CD14-positive monocyte (primary cell): ENCODE measurements at regions of chr17 and their contacts with region 1.

Region 1: DNA sequence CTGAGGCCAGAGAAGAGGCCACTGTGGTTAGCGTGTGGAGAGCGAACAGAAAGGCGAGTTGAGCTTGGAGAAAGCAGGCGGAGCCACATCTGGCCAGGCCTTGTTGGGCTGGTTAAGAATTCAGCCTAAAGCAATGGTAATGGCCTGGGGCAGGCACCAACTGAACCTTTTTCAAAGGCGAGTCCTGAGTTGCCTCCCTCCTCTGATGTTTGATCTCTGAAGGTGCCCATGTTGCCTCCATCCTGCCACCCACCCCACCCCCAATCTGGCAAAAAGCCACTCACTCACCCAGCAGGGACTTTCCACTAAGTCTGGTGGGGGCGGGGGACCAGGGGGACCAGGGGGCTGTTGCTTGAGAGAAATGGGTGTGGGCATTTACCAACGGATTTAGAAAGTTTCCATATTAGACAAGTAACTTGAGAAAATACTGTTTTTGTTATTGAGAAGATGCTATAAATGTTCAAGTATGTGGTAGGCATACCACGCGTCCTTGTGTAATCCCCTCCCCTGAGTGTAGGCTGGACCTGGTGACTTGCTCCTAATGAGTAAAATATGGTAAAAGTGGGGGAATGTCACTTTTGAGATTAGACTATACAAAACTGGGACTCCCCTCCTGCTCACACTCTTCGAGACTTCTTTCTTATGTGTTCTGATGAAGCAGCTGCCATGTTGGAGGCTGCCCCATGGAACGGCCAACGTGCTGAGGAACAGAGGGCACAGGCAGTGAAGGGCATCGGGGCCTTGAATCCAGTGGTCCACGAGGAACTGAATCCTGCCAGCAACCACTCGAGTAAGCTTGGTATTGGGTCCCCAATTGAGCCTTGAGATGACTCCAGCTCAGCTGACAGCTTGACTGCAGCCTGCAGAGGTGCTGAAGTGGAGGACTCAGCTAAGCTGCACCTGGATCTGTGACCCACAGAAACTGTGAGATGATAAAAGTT is 29.9 kb upstream of the TNS4 start:
- DNase-seq: no peak
- H3K4me3 ChIP-seq: no peak overlapping the region
- H3K4me3 Mint-ChIP-seq: no peak overlapping the region
- H3K27ac ChIP-seq: no peak overlapping the region
- H3K27ac Mint-ChIP-seq: no peak overlapping the region
- H3K4me1 ChIP-seq: peaks cover 0 to 8% of the 10 kb centered on the region in 2 donors
- H3K4me1 Mint-ChIP-seq: peaks cover 15% of the 10 kb centered on the region
- H3K27me3 ChIP-seq: peaks cover 3 to 4% of the 10 kb centered on the region in 2 donors
- H3K27me3 Mint-ChIP-seq: peaks cover 10 to 33% (median 24%) of the 10 kb centered on the region in 3 donors
- CTCF ChIP-seq: no peak

Region 2: DNA sequence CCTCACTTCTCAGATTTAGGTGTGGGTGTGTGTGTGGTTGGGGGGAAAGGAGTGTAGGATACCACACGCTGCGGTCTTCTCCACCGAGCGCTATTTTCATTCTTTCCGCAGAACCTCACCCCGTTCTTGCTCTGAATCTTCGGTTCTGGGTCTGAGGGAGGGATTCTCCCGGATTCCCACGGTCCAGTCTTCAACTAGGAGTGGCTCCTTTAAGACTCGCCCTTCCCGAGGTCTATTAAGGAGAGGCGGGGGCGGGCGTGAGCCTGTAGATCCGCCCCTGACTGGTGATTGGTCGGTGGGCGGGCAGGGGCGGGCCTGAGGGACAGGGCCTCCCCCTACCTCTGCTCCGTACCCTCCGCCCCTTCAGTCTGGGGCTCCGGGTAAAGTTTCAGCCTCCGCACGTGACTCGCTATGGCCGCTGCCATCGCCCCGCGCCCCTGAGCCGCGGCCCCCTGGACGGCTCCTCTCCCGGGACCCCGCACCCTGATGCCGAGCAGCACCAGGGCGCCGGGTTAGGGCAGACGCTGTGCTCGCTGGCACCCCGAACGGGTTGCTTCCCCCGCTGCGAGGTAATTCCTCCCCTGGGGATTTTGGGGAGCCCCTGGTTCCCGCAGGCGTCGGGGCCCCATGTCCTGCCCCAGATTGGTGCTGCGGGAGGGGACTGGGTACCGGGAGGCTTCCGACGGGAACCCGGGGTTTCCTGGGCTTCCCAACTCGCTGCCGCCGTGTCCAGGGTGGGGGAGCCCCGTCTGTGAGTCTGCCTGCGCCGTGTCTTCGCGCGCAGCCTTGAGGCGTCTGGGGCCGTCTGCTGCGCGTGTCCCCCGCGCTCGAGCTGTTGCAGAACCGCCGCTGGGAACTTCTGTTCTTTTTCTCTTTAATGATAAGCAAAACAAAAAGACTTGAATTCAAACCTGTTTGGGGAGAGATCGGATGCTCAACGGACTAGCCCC is 213.2 kb before region 1 on chr17:
- intact Hi-C with region 1: no loop called
- DNase-seq: peak; percentile 94 to 96 (median 95)
- H3K4me3 ChIP-seq: peak overlapping the region; percentile 75 to 100 (median 100)
- H3K4me3 Mint-ChIP-seq: peak overlapping the region; percentile 99
- H3K27ac ChIP-seq: peak overlapping the region; percentile 99 to 100
- H3K27ac Mint-ChIP-seq: peak overlapping the region; percentile 99 to 100 (median 100)
- H3K4me1 ChIP-seq: peaks cover 65 to 69% of the 10 kb centered on the region in 2 donors
- H3K4me1 Mint-ChIP-seq: peaks cover 55% of the 10 kb centered on the region
- H3K27me3 ChIP-seq: no peaks in the 10 kb centered on the region
- H3K27me3 Mint-ChIP-seq: peaks cover 0 to 14% (median 7%) of the 10 kb centered on the region in 3 donors
- CTCF ChIP-seq: no peak

Region 3: GRCh38 chr17:40374821-40375498 is 156.4 kb before region 1 on chr17:
- intact Hi-C with region 1: no loop called
- DNase-seq: no peak
- H3K4me3 ChIP-seq: no peak overlapping the region
- H3K4me3 Mint-ChIP-seq: no peak overlapping the region
- H3K27ac ChIP-seq: no peak overlapping the region
- H3K27ac Mint-ChIP-seq: peak overlapping the region in 1 of 7 donors; percentile 75
- H3K4me1 ChIP-seq: peaks cover 0 to 13% of the 10 kb centered on the region in 2 donors
- H3K4me1 Mint-ChIP-seq: peaks cover 31% of the 10 kb centered on the region
- H3K27me3 ChIP-seq: no peaks in the 10 kb centered on the region
- H3K27me3 Mint-ChIP-seq: peaks cover 0 to 11% (median 9%) of the 10 kb centered on the region in 3 donors
- CTCF ChIP-seq: no peak

Region 4: GRCh38 chr17:40443583-40444327 is 87.6 kb before region 1 on chr17:
- intact Hi-C with region 1: loop called in 1 of 2 experiments (anchors 5 kb)
- DNase-seq: peak; percentile 58 to 73 (median 61)
- H3K4me3 ChIP-seq: peak overlapping the region in 2 of 3 experiments; percentile 24 to 71
- H3K4me3 Mint-ChIP-seq: peak overlapping the region; percentile 66 to 85
- H3K27ac ChIP-seq: no peak overlapping the region
- H3K27ac Mint-ChIP-seq: peak overlapping the region in 2 of 7 donors; percentile 40
- H3K4me1 ChIP-seq: peaks cover 32 to 43% of the 10 kb centered on the region in 2 donors
- H3K4me1 Mint-ChIP-seq: peaks cover 39% of the 10 kb centered on the region
- H3K27me3 ChIP-seq: peaks cover 0 to 20% of the 10 kb centered on the region in 2 donors
- H3K27me3 Mint-ChIP-seq: peaks cover 28 to 54% (median 31%) of the 10 kb centered on the region in 3 donors
- CTCF ChIP-seq: peak; percentile 55

Region 5: GRCh38 chr17:40542558-40543411 is 11.5 kb after region 1 on chr17:
- intact Hi-C with region 1: no loop called
- DNase-seq: peak in 1 of 3 donors; percentile 52
- H3K4me3 ChIP-seq: no peak overlapping the region
- H3K4me3 Mint-ChIP-seq: no peak overlapping the region
- H3K27ac ChIP-seq: no peak overlapping the region
- H3K27ac Mint-ChIP-seq: peak overlapping the region in 3 of 7 donors; percentile 33 to 72 (median 71)
- H3K4me1 ChIP-seq: no peaks in the 10 kb centered on the region
- H3K4me1 Mint-ChIP-seq: peaks cover 13% of the 10 kb centered on the region
- H3K27me3 ChIP-seq: no peaks in the 10 kb centered on the region
- H3K27me3 Mint-ChIP-seq: peaks cover 5 to 7% (median 5%) of the 10 kb centered on the region in 3 donors
- CTCF ChIP-seq: no peak